ENCODE measurements at regions of chr15 and their contacts with region 1.

Region 1: GRCh38 chr15:90201130-90201949 is at the start of gene SEMA4B:
- DNase-seq: peak; percentile 67 to 83
- H3K4me3 ChIP-seq: peak within 1 kb of the TSS; percentile 71 to 96
- H3K27ac ChIP-seq: peak within 1 kb of the TSS; percentile 74 to 84
- H3K4me1 ChIP-seq: peaks cover 0 to 54% (median 43%) of the 10 kb centered on the region in 4 donors
- H3K27me3 ChIP-seq: no peaks in the 10 kb centered on the region
- CTCF ChIP-seq: peak in 1 of 2 experiments; percentile 3

Region 2: DNA sequence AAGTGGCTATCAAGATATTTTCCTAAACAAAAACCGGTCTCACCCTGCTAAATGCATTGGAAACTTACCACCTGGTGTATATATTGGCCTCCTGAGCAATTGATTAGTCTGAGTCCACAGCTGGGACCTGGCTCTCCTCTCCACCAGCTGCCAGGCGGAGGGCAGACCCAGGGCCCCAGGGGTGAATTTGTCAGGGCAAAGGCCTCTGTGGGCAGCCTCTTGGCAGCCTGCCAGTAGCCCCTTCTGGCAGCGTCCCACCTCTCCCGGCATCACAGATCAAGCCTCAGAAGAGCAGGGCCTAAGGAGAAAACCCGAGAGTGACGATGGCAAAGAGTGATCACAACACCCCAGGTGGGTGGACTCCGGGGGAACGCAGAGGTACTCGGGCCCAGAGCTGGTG is 56.1 kb before region 1 on chr15:
- intact Hi-C with region 1: no loop called
- DNase-seq: no peak
- H3K4me3 ChIP-seq: no peak overlapping the region
- H3K27ac ChIP-seq: no peak overlapping the region
- H3K4me1 ChIP-seq: peaks cover 0 to 5% (median 2%) of the 10 kb centered on the region in 4 donors
- H3K27me3 ChIP-seq: no peaks in the 10 kb centered on the region
- CTCF ChIP-seq: no peak

Region 3: GRCh38 chr15:90161950-90162361 is 39.4 kb before region 1 on chr15:
- intact Hi-C with region 1: loop called (anchors 5 kb)
- DNase-seq: no peak
- H3K4me3 ChIP-seq: no peak overlapping the region
- H3K27ac ChIP-seq: no peak overlapping the region
- H3K4me1 ChIP-seq: peaks cover 0 to 30% (median 18%) of the 10 kb centered on the region in 4 donors
- H3K27me3 ChIP-seq: no peaks in the 10 kb centered on the region
- CTCF ChIP-seq: no peak

Region 4: DNA sequence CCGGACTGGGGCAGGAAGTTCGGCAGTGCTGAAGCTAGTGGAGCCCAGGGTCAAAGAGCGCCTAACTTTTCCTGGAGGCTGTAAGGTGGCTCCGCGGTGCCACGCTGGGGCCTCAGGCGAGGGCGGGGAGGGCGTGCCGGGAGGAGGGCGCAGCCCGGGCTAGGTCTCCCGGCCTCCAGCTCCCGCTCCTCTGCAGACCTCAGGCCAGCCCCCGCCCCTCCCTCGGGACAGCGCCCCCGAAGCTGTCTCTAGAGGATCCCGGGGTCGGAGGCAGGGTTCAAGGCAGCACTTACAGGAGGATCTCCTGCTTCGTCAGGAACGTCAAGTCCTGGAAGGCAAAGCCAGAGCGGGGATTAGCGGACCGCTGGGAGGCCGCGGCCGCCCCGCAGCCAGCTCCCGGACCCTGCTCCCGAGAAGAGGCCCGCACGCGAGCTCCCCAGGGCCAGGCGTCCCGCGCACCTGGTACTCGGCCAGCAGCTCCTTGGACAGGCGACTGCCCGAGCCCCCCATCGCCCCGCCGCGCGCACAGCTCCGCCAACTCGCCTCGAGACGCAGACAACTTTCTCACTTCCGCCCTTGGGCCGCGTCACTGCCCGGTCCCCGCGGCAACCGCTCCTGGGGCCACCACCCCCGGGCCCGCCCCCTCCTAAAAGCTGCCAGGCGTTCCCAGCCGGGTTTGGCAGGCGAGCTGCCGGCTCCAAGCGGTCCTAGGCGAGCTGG is 32.2 kb after region 1 on chr15 and contains the start of gene CIB1:
- intact Hi-C with region 1: no loop called
- DNase-seq: peak; percentile 95 to 98
- H3K4me3 ChIP-seq: peak within 1 kb of the TSS; percentile 80 to 97
- H3K27ac ChIP-seq: peak within 1 kb of the TSS; percentile 92 to 96
- H3K4me1 ChIP-seq: peaks cover 0 to 41% (median 25%) of the 10 kb centered on the region in 4 donors
- H3K27me3 ChIP-seq: no peaks in the 10 kb centered on the region
- CTCF ChIP-seq: peak; percentile 29 to 38

Region 5: GRCh38 chr15:90387537-90388461 is 186.5 kb after region 1 on chr15 and contains the start of gene IQGAP1:
- intact Hi-C with region 1: no loop called
- DNase-seq: peak; percentile 97 to 99
- H3K4me3 ChIP-seq: peak within 1 kb of the TSS; percentile 79 to 99
- H3K27ac ChIP-seq: peak within 1 kb of the TSS; percentile 98 to 100
- H3K4me1 ChIP-seq: peaks cover 4 to 38% (median 26%) of the 10 kb centered on the region in 4 donors
- H3K27me3 ChIP-seq: no peaks in the 10 kb centered on the region
- CTCF ChIP-seq: no peak

Region 6: DNA sequence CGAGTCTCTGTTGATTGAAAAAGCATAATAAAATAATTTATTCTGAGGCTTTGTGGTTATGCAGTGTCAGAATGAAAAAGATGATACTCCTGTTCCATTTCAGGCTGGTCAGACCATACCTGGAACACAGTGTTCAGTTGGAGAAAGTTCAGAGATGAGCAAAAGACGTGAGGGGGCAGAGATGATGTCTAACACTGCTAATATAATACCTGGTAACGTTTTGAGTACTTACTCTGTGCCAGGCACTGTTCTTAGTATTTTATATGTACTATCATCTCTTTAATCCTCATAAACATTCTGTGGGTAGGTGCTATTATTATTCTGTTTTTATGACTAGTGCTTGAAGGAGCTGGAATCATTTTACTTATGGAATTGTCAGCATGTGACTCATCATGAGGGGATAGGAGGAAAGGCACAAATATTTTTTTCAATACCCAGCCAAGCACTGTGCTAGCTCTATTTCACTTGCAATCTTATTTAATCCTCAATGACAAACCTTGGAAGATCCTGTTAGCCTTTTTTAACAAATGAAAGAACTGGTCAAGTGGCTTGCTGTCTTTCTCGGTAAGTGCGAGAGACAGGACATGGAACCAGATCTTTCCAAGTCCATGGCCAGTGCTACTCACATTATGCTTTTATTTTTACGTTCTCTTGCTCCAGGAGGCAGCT is 218.5 kb after region 1 on chr15:
- intact Hi-C with region 1: no loop called
- DNase-seq: no peak
- H3K4me3 ChIP-seq: peak overlapping the region in 1 of 2 donors; percentile 5
- H3K27ac ChIP-seq: peak overlapping the region; percentile 69 to 73
- H3K4me1 ChIP-seq: peaks cover 0 to 78% (median 52%) of the 10 kb centered on the region in 4 donors
- H3K27me3 ChIP-seq: no peaks in the 10 kb centered on the region
- CTCF ChIP-seq: no peak

Measured in tibial artery (tissue), 4 donors.